Psoas muscle (tissue), 8 donors: ENCODE measurements at regions of chr2 and their contacts with region 1.

Region 1: GRCh38 chr2:121071034-121071504 is 213.9 kb downstream of the TFCP2L1 start:
- DNase-seq: peak; percentile 63 to 84
- ATAC-seq: peak; percentile 63 to 83 (median 67)
- H3K4me3 ChIP-seq: no peak overlapping the region
- H3K27ac ChIP-seq: no peak overlapping the region
- H3K4me1 ChIP-seq: no peaks in the 10 kb centered on the region
- H3K27me3 ChIP-seq: peaks cover 0 to 11% (median 8%) of the 10 kb centered on the region in 3 donors
- CTCF ChIP-seq: peak; percentile 97

Region 2: DNA sequence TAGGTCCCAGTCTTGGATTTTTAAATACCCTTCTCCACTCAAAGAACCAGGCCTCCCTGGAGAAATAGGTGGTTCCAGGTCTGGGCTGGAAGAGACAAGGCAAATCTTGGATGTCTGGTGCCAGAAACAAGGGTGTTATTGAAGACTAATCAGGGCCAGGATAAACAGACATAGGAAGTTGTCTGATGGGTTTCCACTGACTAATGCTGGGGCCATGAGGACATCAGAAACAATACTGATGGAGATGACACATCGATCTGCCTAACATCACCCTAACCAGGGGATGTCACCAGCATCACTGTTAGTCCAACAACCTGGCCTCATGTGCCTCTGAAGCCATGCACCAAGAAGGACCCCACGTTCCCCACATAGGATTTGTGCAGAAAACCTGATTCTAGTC is 377.9 kb before region 1 on chr2:
- intact Hi-C with region 1: loop called in 1 of 2 experiments (anchors 2 kb)
- DNase-seq: no peak
- ATAC-seq: no peak
- H3K4me3 ChIP-seq: no peak overlapping the region
- H3K27ac ChIP-seq: no peak overlapping the region
- H3K4me1 ChIP-seq: no peaks in the 10 kb centered on the region
- H3K27me3 ChIP-seq: peaks cover 0 to 29% (median 4%) of the 10 kb centered on the region in 3 donors
- CTCF ChIP-seq: no peak

Region 3: DNA sequence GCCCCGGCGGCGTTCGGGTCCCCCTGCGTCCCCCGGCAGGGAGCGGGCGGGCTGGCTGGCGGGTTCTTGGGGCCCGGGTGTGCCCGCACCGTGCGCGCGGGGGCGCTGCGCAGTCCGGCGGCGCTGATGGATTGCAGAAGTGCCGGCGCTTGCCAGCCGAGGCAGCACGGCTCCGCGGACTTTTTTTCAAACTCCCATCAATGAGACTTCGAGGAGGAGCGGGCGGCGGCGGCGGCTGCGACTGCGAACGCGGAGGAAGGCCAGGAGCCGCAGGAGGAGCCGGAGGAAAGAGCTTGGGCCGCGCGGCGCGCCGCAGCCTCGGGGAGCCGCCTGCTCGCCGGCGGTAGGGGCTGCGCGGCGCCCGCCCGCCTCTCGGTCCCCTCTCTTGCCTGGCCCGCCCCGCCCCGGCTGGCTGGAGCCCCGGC is 335.3 kb before region 1 on chr2 and contains the start of gene GLI2:
- intact Hi-C with region 1: loop called (anchors 2 to 5 kb)
- DNase-seq: peak; percentile 74 to 86
- ATAC-seq: peak; percentile 86 to 94 (median 91)
- H3K4me3 ChIP-seq: peak within 1 kb of the TSS; percentile 69
- H3K27ac ChIP-seq: peak within 1 kb of the TSS; percentile 46
- H3K4me1 ChIP-seq: peaks cover 10% of the 10 kb centered on the region
- H3K27me3 ChIP-seq: peaks cover 0 to 68% (median 31%) of the 10 kb centered on the region in 3 donors
- CTCF ChIP-seq: peak; percentile 67
- total RNA-seq, gene GLI2: 0.66 to 2.4 (median 0.76) TPM

Region 4: GRCh38 chr2:120856421-120856862 is 214.6 kb before region 1 on chr2:
- intact Hi-C with region 1: loop called in 1 of 2 experiments (anchors 10 kb)
- DNase-seq: no peak
- ATAC-seq: peak in 1 of 4 donors; percentile 22
- H3K4me3 ChIP-seq: no peak overlapping the region
- H3K27ac ChIP-seq: no peak overlapping the region
- H3K4me1 ChIP-seq: no peaks in the 10 kb centered on the region
- H3K27me3 ChIP-seq: no peaks in the 10 kb centered on the region
- CTCF ChIP-seq: peak; percentile 6

Region 5: DNA sequence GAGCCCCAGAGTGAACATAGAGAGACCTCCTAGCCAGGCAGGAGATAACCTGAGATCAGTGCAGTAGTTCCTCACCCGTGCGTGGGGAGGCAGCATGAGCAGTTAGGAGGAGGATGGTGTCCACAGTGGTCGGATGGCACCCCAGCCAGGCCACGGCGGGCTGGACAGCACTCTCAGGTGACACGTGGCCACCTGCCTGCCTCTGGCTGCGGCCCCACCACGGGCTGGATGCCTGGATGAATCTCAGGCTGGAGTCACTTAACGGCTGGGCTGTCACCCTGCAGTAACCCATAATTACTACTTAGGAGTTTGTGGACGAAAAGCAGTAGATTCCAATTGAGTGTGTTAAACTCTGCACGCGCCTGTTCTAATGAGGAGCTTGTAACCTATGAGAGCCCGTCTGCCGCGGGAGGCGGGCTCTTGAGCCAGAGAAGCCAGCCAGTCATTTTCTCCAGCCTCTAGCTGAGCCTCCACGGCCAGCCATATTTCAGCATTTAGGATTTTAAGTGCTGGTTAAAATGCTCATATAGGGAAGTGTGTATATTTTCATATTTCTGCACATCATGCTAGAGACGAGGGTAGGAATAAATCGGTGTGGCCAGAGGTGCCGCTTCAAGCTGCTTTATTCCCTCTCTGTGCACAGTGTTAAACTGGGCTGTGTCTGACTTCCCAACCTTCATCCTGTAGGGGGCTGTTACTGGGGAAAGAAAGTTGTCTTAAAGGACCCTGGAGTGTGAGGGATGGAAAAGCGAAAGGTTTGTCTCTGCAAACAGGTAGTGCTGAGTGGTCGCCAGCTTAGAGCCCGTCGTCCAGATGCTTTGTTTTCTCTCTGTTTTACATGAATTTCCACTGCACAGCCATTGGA is 191.4 kb before region 1 on chr2:
- intact Hi-C with region 1: loop called in 1 of 2 experiments (anchors 2 kb)
- DNase-seq: peak in 1 of 2 donors; percentile 78
- ATAC-seq: peak; percentile 73 to 89 (median 84)
- H3K4me3 ChIP-seq: peak overlapping the region; percentile 24
- H3K27ac ChIP-seq: peak overlapping the region; percentile 31
- H3K4me1 ChIP-seq: peaks cover 32% of the 10 kb centered on the region
- H3K27me3 ChIP-seq: no peaks in the 10 kb centered on the region
- CTCF ChIP-seq: peak; percentile 39